ENCODE measurements at regions of chr18 and their contacts with region 1.

Region 1: GRCh38 chr18:3297025-3297984 is 35.4 kb downstream of the MYL12B start:
- DNase-seq: peak; percentile 97
- ATAC-seq: peak; percentile 94
- H3K4me3 Mint-ChIP-seq: peak overlapping the region; percentile 91
- H3K27ac Mint-ChIP-seq: peak overlapping the region; percentile 83
- H3K4me1 Mint-ChIP-seq: peaks cover 18% of the 10 kb centered on the region
- H3K27me3 Mint-ChIP-seq: peaks cover 4% of the 10 kb centered on the region; the same call in 1 of the 2 replicates
- CTCF ChIP-seq: peak; percentile 59

Region 2: GRCh38 chr18:3281456-3282400 is 15.6 kb before region 1 on chr18:
- CTCF ChIA-PET with region 1: interaction called, 15 read pairs
- POLR2A ChIA-PET with region 1: interaction called, 3 read pairs
- DNase-seq: no peak
- ATAC-seq: peak; percentile 51
- H3K4me3 Mint-ChIP-seq: no peak overlapping the region
- H3K27ac Mint-ChIP-seq: no peak overlapping the region
- H3K4me1 Mint-ChIP-seq: peaks cover 52% of the 10 kb centered on the region
- H3K27me3 Mint-ChIP-seq: no peaks in the 10 kb centered on the region
- CTCF ChIP-seq: peak; percentile 62

Region 3: GRCh38 chr18:3360211-3360610 is 62.9 kb after region 1 on chr18:
- CTCF ChIA-PET with region 1: interaction called, 10 read pairs
- POLR2A ChIA-PET with region 1: no interaction called
- DNase-seq: peak; percentile 72
- ATAC-seq: peak; percentile 83
- H3K4me3 Mint-ChIP-seq: no peak overlapping the region
- H3K27ac Mint-ChIP-seq: no peak overlapping the region
- H3K4me1 Mint-ChIP-seq: peaks cover 31% of the 10 kb centered on the region
- H3K27me3 Mint-ChIP-seq: no peaks in the 10 kb centered on the region
- CTCF ChIP-seq: no peak

Region 4: GRCh38 chr18:3454365-3455089 is 157.2 kb after region 1 on chr18:
- CTCF ChIA-PET with region 1: interaction called, 10 read pairs
- POLR2A ChIA-PET with region 1: interaction called, 3 read pairs
- DNase-seq: peak; percentile 45
- ATAC-seq: peak; percentile 7
- H3K4me3 Mint-ChIP-seq: peak overlapping the region; percentile 96
- H3K27ac Mint-ChIP-seq: peak overlapping the region; percentile 98
- H3K4me1 Mint-ChIP-seq: peaks cover 62% of the 10 kb centered on the region
- H3K27me3 Mint-ChIP-seq: no peaks in the 10 kb centered on the region
- CTCF ChIP-seq: peak; percentile 46

Region 5: GRCh38 chr18:3604498-3605408 is 307.4 kb after region 1 on chr18:
- CTCF ChIA-PET with region 1: interaction called, 6 read pairs
- POLR2A ChIA-PET with region 1: interaction called, 13 read pairs
- DNase-seq: no peak
- ATAC-seq: no peak
- H3K4me3 Mint-ChIP-seq: no peak overlapping the region
- H3K27ac Mint-ChIP-seq: no peak overlapping the region
- H3K4me1 Mint-ChIP-seq: peaks cover 24% of the 10 kb centered on the region
- H3K27me3 Mint-ChIP-seq: no peaks in the 10 kb centered on the region
- CTCF ChIP-seq: no peak

Measured in WTC11 (cell line).